Naive thymus-derived CD4-positive, alpha-beta T cell (primary cell): ENCODE measurements at regions of chr6 and their contacts with region 1.

Region 1: DNA sequence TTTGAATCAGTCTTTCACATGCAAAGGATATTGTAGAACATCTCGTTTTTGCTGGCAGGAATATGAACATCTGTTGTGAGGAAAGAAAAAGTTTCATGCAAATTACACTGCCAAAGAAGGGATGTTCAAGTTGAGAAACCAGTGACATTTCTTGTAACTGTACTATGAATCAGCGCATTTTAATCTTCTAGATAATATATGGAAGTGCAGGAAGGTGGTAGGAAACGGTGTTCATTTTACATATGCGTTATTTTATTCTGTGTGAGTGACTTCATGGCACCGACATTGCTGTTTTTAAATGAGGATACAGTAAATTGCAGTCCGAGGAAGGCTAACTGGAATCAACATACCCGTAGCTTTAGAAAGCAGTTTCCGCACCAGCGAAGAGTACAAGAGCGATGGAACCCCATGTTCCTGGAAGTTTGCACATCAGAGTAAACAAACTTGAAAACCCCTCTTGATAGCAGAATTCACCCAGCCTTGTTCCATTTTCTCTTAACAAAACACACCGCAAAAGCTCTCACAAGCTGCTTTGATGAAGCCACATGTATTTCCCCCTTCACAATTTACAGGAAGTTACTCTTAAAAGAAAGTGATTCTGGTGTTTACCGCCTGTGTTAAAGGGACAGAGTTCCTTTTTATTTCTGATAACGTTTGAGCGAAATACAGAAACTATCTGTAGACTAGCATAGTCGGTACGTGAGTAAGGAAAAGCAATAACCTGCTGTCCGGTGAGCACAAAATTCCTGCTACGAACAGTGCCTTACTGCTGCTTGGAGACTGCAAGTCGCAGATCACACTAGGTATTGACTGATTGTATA is 11.5 kb downstream of the PRDM1 start:
- DNase-seq: peak in 8 of 9 donors; percentile 60 to 95 (median 90)
- ATAC-seq: peak; percentile 79
- H3K4me3 ChIP-seq: peak overlapping the region; percentile 60
- H3K4me3 Mint-ChIP-seq: peak overlapping the region; percentile 87 to 99 (median 93)
- H3K27ac ChIP-seq: peak overlapping the region; percentile 74
- H3K27ac Mint-ChIP-seq: peak overlapping the region; percentile 93 to 100 (median 97)
- H3K4me1 ChIP-seq: peaks cover 35 to 39% of the 10 kb centered on the region in 2 donors
- H3K4me1 Mint-ChIP-seq: peaks cover 33 to 96% (median 92%) of the 10 kb centered on the region in 7 donors
- H3K27me3 ChIP-seq: no peaks in the 10 kb centered on the region
- H3K27me3 Mint-ChIP-seq: no peaks in the 10 kb centered on the region

Region 2: GRCh38 chr6:105646391-105646867 is 451.2 kb before region 1 on chr6:
- CTCF ChIA-PET with region 1: no interaction called
- POLR2A ChIA-PET with region 1: no interaction called
- intact Hi-C with region 1: loop called in 1 of 2 experiments (anchors 1 kb)
- DNase-seq: peak in 1 of 9 donors; percentile 36
- ATAC-seq: peak; percentile 81
- H3K4me3 ChIP-seq: no peak overlapping the region
- H3K4me3 Mint-ChIP-seq: peak overlapping the region in 1 of 10 donors; percentile 41
- H3K27ac ChIP-seq: no peak overlapping the region
- H3K27ac Mint-ChIP-seq: peak overlapping the region in 2 of 9 donors; percentile 12 to 83
- H3K4me1 ChIP-seq: peaks cover 0 to 79% of the 10 kb centered on the region in 2 donors
- H3K4me1 Mint-ChIP-seq: peaks cover 30 to 80% (median 44%) of the 10 kb centered on the region in 7 donors
- H3K27me3 ChIP-seq: no peaks in the 10 kb centered on the region
- H3K27me3 Mint-ChIP-seq: peaks cover 0 to 5% (median 0%) of the 10 kb centered on the region in 5 donors

Region 3: DNA sequence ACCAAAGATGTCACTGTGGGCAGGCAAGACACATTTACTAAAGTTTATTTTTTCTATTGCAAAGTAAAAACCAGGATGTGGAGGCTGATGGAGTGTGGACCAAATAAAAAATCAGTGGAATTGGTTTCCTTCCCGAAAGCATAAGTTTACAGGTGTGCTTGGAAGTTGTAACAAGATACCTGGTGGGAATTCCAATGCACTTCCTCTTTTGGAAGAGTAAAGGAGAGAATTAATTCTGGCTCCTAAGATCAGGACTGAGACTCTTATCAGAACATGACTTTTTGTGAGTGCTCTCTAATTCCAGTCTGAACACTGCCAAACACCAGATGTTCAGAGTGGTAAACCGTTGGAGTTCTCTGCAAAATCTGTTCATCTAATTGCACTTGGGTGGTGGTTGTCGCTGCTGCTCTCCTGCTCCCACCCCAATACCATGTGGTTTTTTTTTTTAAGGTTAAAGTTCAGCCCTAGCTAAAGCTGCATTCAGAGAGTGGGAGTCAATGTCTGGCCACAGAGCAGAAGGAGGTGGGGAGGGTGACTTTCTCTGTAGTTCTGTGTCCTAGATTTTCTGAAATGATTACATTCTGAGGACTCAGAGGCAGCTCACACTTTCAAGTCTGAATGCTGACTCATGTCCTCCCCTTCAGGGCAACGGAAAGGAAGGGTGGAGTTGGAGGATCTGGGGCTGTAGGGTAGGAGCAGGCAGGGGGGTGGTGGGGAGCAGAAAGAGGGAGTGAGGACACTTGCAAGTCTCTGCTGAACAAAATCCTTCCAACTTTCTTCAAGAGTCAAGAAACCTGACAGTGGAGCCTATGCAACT is 287.3 kb before region 1 on chr6:
- CTCF ChIA-PET with region 1: no interaction called
- POLR2A ChIA-PET with region 1: no interaction called
- intact Hi-C with region 1: loop called in 1 of 2 experiments (anchors 5 kb)
- DNase-seq: peak in 1 of 9 donors; percentile 69
- ATAC-seq: peak; percentile 72
- H3K4me3 ChIP-seq: no peak overlapping the region
- H3K4me3 Mint-ChIP-seq: peak overlapping the region in 2 of 10 donors; percentile 17 to 61
- H3K27ac ChIP-seq: no peak overlapping the region
- H3K27ac Mint-ChIP-seq: peak overlapping the region in 3 of 9 donors; percentile 26 to 78 (median 55)
- H3K4me1 ChIP-seq: peaks cover 0 to 30% of the 10 kb centered on the region in 2 donors
- H3K4me1 Mint-ChIP-seq: peaks cover 0 to 74% (median 23%) of the 10 kb centered on the region in 7 donors
- H3K27me3 ChIP-seq: no peaks in the 10 kb centered on the region
- H3K27me3 Mint-ChIP-seq: no peaks in the 10 kb centered on the region

Region 4: GRCh38 chr6:106085984-106086813 is 11.4 kb before region 1 on chr6 and contains the start of gene PRDM1:
- CTCF ChIA-PET with region 1: interaction called, 9 read pairs
- POLR2A ChIA-PET with region 1: interaction called, 6 read pairs
- intact Hi-C with region 1: loop called (anchors 1 kb)
- DNase-seq: peak; percentile 33 to 79 (median 53)
- ATAC-seq: peak; percentile 92
- H3K4me3 ChIP-seq: peak within 1 kb of the TSS; percentile 63
- H3K4me3 Mint-ChIP-seq: peak within 1 kb of the TSS; percentile 84 to 96 (median 90)
- H3K27ac ChIP-seq: no peak within 1 kb of the TSS
- H3K27ac Mint-ChIP-seq: peak within 1 kb of the TSS; percentile 37 to 92 (median 78)
- H3K4me1 ChIP-seq: peaks cover 50 to 60% of the 10 kb centered on the region in 2 donors
- H3K4me1 Mint-ChIP-seq: peaks cover 50 to 89% (median 76%) of the 10 kb centered on the region in 7 donors
- H3K27me3 ChIP-seq: peaks cover 0 to 14% of the 10 kb centered on the region in 2 donors
- H3K27me3 Mint-ChIP-seq: peaks cover 10 to 47% (median 18%) of the 10 kb centered on the region in 5 donors
- total RNA-seq, gene PRDM1: 2.0 to 64.1 (median 22.6) TPM

Region 5: GRCh38 chr6:106163446-106163965 is 65.9 kb after region 1 on chr6:
- CTCF ChIA-PET with region 1: no interaction called
- POLR2A ChIA-PET with region 1: no interaction called
- intact Hi-C with region 1: loop called in 1 of 2 experiments (anchors 1 kb)
- DNase-seq: peak in 1 of 9 donors; percentile 51
- ATAC-seq: peak; percentile 60
- H3K4me3 ChIP-seq: no peak overlapping the region
- H3K4me3 Mint-ChIP-seq: peak overlapping the region in 7 of 10 donors; percentile 14 to 77 (median 31)
- H3K27ac ChIP-seq: no peak overlapping the region
- H3K27ac Mint-ChIP-seq: peak overlapping the region in 6 of 9 donors; percentile 14 to 98 (median 34)
- H3K4me1 ChIP-seq: peaks cover 6 to 26% of the 10 kb centered on the region in 2 donors
- H3K4me1 Mint-ChIP-seq: peaks cover 13 to 56% (median 22%) of the 10 kb centered on the region in 7 donors
- H3K27me3 ChIP-seq: no peaks in the 10 kb centered on the region
- H3K27me3 Mint-ChIP-seq: peaks cover 0 to 3% (median 0%) of the 10 kb centered on the region in 5 donors

Region 6: GRCh38 chr6:106223300-106223930 is 125.8 kb after region 1 on chr6:
- CTCF ChIA-PET with region 1: interaction called, 8 read pairs
- POLR2A ChIA-PET with region 1: interaction called, 7 read pairs
- intact Hi-C with region 1: loop called (anchors 1 to 2 kb)
- DNase-seq: peak; percentile 18 to 76 (median 65)
- ATAC-seq: peak; percentile 91
- H3K4me3 ChIP-seq: no peak overlapping the region
- H3K4me3 Mint-ChIP-seq: no peak overlapping the region
- H3K27ac ChIP-seq: no peak overlapping the region
- H3K27ac Mint-ChIP-seq: peak overlapping the region in 2 of 9 donors; percentile 5 to 61
- H3K4me1 ChIP-seq: no peaks in the 10 kb centered on the region
- H3K4me1 Mint-ChIP-seq: peaks cover 9 to 25% (median 17%) of the 10 kb centered on the region in 7 donors
- H3K27me3 ChIP-seq: no peaks in the 10 kb centered on the region
- H3K27me3 Mint-ChIP-seq: no peaks in the 10 kb centered on the region